PC-9 (cell line): ENCODE measurements at regions of chr11 and their contacts with region 1.

Region 1: DNA sequence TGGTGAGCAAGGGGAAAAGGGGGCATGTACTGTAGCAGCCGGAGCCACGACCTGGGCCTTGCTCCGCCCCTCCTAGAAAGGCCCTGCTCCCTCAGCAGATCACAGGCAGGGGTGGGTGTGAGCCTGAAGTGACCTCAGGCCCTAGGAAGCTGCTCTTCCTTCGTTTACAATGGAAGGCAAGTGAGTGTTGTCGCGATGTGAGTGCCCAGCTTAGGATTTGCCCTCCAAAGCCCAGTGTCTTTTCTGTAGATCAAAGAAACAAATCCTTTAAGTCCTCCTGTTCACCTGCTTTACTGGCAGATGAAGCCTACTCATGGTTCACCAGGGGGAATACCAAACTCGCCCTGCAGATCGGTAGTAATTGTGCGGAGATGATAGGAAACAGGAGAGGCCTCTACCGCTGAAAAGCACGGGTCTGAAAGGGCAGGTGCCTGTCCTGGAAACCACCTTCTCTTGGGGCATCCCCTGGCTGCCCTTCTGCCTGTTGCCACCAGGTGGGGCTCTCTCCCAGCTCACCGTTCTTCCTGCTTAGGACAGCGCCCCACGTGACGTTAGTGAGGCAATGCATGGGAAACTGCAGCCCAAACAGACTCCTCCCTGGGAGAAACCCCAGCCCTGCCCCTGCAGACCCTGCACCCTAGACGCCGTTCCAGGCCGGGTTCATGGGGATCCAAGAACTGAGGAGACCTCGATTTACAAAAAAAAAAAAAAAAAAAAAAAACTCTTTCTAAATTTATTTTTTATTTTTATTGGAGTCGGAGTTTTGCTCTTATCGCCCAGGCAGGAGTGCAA is 45.9 kb upstream of the RAB1B start:
- DNase-seq: peak; percentile 86 to 90
- H3K4me3 ChIP-seq: no peak overlapping the region
- H3K27ac ChIP-seq: no peak overlapping the region
- H3K4me1 ChIP-seq: no peaks in the 10 kb centered on the region; the same call in 1 of the 2 replicates
- H3K27me3 ChIP-seq: no peaks in the 10 kb centered on the region
- CTCF ChIP-seq: peak; percentile 98

Region 2: GRCh38 chr11:66081505-66081904 is 141.0 kb before region 1 on chr11:
- CTCF ChIA-PET with region 1: interaction called, 10 read pairs
- POLR2A ChIA-PET with region 1: interaction called, 3 read pairs
- intact Hi-C with region 1: loop called (anchors 5 kb)
- DNase-seq: peak; percentile 79 to 94
- H3K4me3 ChIP-seq: peak overlapping the region; percentile 42; the same call in 1 of the 2 replicates
- H3K27ac ChIP-seq: peak overlapping the region; percentile 57
- H3K4me1 ChIP-seq: peaks cover 42% of the 10 kb centered on the region
- H3K27me3 ChIP-seq: no peaks in the 10 kb centered on the region
- CTCF ChIP-seq: no peak

Region 3: GRCh38 chr11:66159324-66159984 is 63.1 kb before region 1 on chr11:
- CTCF ChIA-PET with region 1: interaction called, 12 read pairs
- POLR2A ChIA-PET with region 1: interaction called, 7 read pairs
- intact Hi-C with region 1: no loop called
- DNase-seq: no peak
- H3K4me3 ChIP-seq: no peak overlapping the region
- H3K27ac ChIP-seq: no peak overlapping the region
- H3K4me1 ChIP-seq: peaks cover 9% of the 10 kb centered on the region
- H3K27me3 ChIP-seq: no peaks in the 10 kb centered on the region
- CTCF ChIP-seq: no peak

Region 4: GRCh38 chr11:66336234-66337102 is 113.9 kb after region 1 on chr11 and contains the start of gene RIN1:
- CTCF ChIA-PET with region 1: interaction called, 3 read pairs
- POLR2A ChIA-PET with region 1: no interaction called
- intact Hi-C with region 1: loop called (anchors 2 kb)
- DNase-seq: peak; percentile 90 to 92
- H3K4me3 ChIP-seq: peak within 1 kb of the TSS; percentile 79
- H3K27ac ChIP-seq: peak within 1 kb of the TSS; percentile 65
- H3K4me1 ChIP-seq: peaks cover 16% of the 10 kb centered on the region
- H3K27me3 ChIP-seq: no peaks in the 10 kb centered on the region
- CTCF ChIP-seq: peak; percentile 52
- total RNA-seq, gene RIN1: 15.5 and 19.5 TPM in 2 replicates